PC-9 (cell line): ENCODE measurements at regions of chr17 and their contacts with region 1.

Region 1: GRCh38 chr17:3308603-3309002 is 10.4 kb upstream of the OR3A1 start:
- DNase-seq: no peak
- H3K4me3 ChIP-seq: no peak overlapping the region
- H3K27ac ChIP-seq: no peak overlapping the region
- H3K4me1 ChIP-seq: no peaks in the 10 kb centered on the region
- H3K27me3 ChIP-seq: peaks cover 74% of the 10 kb centered on the region
- CTCF ChIP-seq: no peak

Region 2: GRCh38 chr17:3998436-3998835 is 689.8 kb after region 1 on chr17:
- CTCF ChIA-PET with region 1: no interaction called
- POLR2A ChIA-PET with region 1: interaction called, 10 read pairs
- intact Hi-C with region 1: no loop called
- DNase-seq: no peak
- H3K4me3 ChIP-seq: no peak overlapping the region
- H3K27ac ChIP-seq: no peak overlapping the region
- H3K4me1 ChIP-seq: peaks cover 12% of the 10 kb centered on the region; the same call in 1 of the 2 replicates
- H3K27me3 ChIP-seq: no peaks in the 10 kb centered on the region
- CTCF ChIP-seq: no peak